ENCODE measurements at regions of chr2 and their contacts with region 1.

Region 1: DNA sequence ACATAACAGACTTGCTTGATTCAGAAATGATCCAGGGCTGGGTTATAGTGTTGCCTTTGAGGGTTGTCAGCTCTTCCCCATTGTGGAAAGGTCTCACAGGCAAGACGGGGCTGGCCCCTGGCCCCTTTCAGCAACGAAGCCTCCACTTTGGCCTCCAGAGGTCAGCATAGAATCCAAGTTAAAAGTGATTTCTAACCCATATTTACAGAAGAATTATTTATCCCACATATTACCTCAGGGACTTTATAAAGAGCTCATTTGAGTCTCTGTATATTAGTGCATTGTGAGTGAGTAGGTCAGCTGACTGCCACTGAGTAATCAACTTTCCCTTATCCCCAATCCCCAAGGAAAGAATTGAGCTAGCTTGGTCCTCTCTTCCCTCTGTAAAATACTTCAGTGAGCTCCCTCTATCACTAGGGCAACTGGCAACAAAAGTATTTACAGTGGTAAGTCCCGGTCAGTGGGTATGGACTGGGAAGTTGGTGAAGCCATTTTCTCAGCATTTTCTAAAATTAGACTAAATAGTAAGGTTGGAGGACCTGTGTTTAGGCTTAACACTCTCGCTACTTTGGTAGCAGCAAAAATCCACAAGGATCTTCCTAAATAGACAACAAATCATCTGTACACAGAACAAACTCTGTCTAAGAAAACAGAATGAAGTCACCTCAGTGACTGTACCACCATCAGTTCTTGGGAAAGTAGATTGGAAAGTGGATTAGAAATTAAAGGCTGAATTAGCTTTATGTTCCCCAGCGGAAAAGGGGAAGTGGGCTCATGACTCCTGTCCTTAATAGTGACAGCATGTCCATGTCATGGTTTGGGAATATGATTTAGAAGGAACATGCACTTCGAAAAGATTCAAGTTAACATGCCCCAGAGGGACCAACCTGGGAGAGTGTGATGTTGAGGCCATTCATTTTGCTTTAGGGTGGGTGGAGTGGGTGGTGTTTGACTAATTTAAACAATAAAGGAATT is 171.0 kb upstream of the SIX3 start:
- DNase-seq: no peak
- H3K4me3 ChIP-seq: no peak overlapping the region
- H3K27ac ChIP-seq: no peak overlapping the region
- H3K4me1 ChIP-seq: no peaks in the 10 kb centered on the region
- H3K27me3 ChIP-seq: no peaks in the 10 kb centered on the region
- CTCF ChIP-seq: no peak

Region 2: GRCh38 chr2:44244129-44244871 is 526.2 kb before region 1 on chr2:
- CTCF ChIA-PET with region 1: no interaction called
- POLR2A ChIA-PET with region 1: no interaction called
- intact Hi-C with region 1: no loop called
- DNase-seq: peak; percentile 41 to 67
- H3K4me3 ChIP-seq: peak overlapping the region; percentile 33; the same call in 1 of the 2 replicates
- H3K27ac ChIP-seq: no peak overlapping the region
- H3K4me1 ChIP-seq: peaks cover 17% of the 10 kb centered on the region
- H3K27me3 ChIP-seq: no peaks in the 10 kb centered on the region
- CTCF ChIP-seq: peak; percentile 87

Region 3: GRCh38 chr2:44614940-44615339 is 155.6 kb before region 1 on chr2:
- CTCF ChIA-PET with region 1: interaction called, 21 read pairs
- POLR2A ChIA-PET with region 1: no interaction called
- intact Hi-C with region 1: no loop called
- DNase-seq: no peak
- H3K4me3 ChIP-seq: no peak overlapping the region
- H3K27ac ChIP-seq: no peak overlapping the region
- H3K4me1 ChIP-seq: no peaks in the 10 kb centered on the region
- H3K27me3 ChIP-seq: no peaks in the 10 kb centered on the region
- CTCF ChIP-seq: no peak

Region 4: DNA sequence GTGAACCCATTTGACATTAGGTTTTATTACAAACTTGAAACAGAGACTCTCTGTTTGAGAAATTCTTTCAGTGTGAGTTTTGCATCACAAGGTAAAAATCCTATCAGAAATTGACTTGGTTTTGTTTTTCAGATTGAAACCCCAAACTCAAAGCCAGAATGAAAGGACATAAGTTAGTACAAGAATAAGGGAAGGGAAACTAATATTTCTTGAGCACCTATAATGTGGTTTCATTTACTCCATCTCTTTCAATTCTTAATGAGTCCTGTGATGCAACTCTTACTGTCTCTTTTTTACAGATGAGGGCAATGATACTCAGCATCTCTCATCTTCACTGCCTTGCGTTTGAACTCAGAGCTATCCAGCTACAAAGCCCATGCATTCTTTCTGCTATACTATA is 39.0 kb before region 1 on chr2:
- CTCF ChIA-PET with region 1: no interaction called
- POLR2A ChIA-PET with region 1: interaction called, 12 read pairs
- intact Hi-C with region 1: no loop called
- DNase-seq: no peak
- H3K4me3 ChIP-seq: no peak overlapping the region
- H3K27ac ChIP-seq: no peak overlapping the region
- H3K4me1 ChIP-seq: peaks cover 16% of the 10 kb centered on the region
- H3K27me3 ChIP-seq: no peaks in the 10 kb centered on the region
- CTCF ChIP-seq: no peak

Region 5: DNA sequence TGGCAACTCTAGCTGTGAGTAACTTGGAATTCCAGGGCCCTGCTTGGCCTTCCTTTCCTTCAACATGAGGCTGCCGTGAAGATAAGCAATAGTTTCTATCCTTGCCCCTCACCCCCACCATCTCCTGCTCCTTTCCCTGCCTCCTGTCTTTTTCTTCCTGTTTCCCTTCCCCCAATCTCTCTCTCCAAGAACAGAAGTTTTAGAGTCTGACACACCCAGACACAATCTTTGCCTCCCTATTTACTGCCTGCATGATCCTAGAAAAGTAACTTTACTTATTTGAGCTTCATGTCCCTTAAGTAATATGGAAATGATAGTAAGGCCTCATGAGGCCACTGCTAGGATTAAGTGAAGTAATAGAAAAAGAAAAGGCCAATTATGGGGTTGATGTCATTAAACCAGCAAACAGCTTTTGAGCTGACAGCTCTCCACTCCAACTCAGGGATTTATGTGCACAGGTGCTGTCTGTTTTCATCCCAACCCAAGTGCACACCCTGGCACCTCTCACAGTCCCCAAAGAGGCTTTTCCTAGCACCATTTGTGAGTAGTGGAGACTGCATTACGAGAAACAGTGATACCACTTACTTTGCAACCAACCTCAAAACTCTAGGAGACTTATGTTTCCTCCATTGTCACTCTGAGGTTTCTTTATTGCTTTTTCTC is 47.3 kb after region 1 on chr2:
- CTCF ChIA-PET with region 1: no interaction called
- POLR2A ChIA-PET with region 1: no interaction called
- intact Hi-C with region 1: no loop called
- DNase-seq: no peak
- H3K4me3 ChIP-seq: no peak overlapping the region
- H3K27ac ChIP-seq: no peak overlapping the region
- H3K4me1 ChIP-seq: no peaks in the 10 kb centered on the region
- H3K27me3 ChIP-seq: no peaks in the 10 kb centered on the region
- CTCF ChIP-seq: no peak

Region 6: GRCh38 chr2:45237850-45238542 is 467.5 kb after region 1 on chr2:
- CTCF ChIA-PET with region 1: no interaction called
- POLR2A ChIA-PET with region 1: no interaction called
- intact Hi-C with region 1: no loop called
- DNase-seq: peak; percentile 87 to 99
- H3K4me3 ChIP-seq: peak overlapping the region; percentile 5; the same call in 1 of the 2 replicates
- H3K27ac ChIP-seq: peak overlapping the region; percentile 63
- H3K4me1 ChIP-seq: peaks cover 48% of the 10 kb centered on the region
- H3K27me3 ChIP-seq: no peaks in the 10 kb centered on the region
- CTCF ChIP-seq: peak; percentile 74